AG04449 (cell line): ENCODE measurements at regions of chr4 and their contacts with region 1.

Region 1: GRCh38 chr4:88211473-88212252 is 53.2 kb upstream of the ABCG2 start:
- DNase-seq: no peak
- H3K4me3 ChIP-seq: no peak overlapping the region
- CTCF ChIP-seq: peak; percentile 28

Region 2: DNA sequence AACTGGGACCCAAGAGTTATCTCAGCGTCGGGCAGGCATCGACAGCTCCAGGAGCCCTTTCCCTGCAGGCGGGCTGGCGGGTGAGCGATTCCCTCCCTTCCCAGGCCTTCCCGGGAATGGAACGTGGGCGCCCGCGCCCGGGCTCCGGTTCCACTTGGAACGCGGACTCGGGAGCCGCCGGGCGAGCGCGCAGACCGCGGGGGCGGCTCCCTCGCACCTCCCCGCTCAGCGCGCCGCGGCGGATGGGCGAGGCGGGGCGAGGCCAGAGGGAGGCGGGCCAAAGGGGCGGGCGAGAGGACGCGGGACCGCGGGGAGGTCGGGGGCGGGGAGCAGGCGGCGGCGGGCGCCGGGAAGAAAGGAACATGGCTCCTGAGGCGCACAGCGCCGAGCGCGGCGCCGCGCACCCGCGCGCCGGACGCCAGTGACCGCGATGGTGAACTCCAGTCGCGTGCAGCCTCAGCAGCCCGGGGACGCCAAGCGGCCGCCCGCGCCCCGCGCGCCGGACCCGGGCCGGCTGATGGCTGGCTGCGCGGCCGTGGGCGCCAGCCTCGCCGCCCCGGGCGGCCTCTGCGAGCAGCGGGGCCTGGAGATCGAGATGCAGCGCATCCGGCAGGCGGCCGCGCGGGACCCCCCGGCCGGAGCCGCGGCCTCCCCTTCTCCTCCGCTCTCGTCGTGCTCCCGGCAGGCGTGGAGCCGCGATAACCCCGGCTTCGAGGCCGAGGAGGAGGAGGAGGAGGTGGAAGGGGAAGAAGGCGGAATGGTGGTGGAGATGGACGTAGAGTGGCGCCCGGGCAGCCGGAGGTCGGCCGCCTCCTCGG is 204.2 kb before region 1 on chr4 and contains the start of gene PKD2:
- CTCF ChIA-PET with region 1: interaction called, 10 read pairs
- POLR2A ChIA-PET with region 1: no interaction called
- DNase-seq: no peak
- H3K4me3 ChIP-seq: peak within 1 kb of the TSS; percentile 78
- CTCF ChIP-seq: no peak

Region 3: DNA sequence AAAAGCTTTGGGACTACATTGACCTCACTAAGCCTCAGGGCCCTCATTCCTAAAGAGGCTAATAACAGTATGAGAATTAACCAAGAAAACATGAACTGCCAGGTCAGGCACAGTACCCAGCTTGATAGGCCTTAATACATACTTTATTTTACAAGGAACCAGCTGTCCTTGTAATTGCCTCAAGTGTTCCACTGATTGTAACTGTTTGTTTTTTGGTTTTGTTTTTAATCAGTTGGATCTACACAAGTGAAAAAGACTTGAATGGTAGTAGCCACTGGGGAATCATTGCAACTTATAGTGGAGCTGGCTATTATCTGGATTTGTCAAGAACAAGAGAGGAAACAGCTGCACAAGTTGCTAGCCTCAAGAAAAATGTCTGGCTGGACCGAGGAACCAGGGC is 168.7 kb before region 1 on chr4:
- CTCF ChIA-PET with region 1: interaction called, 24 read pairs
- POLR2A ChIA-PET with region 1: interaction called, 3 read pairs
- DNase-seq: no peak
- H3K4me3 ChIP-seq: no peak overlapping the region
- CTCF ChIP-seq: no peak

Region 4: GRCh38 chr4:88084410-88084809 is 127.3 kb before region 1 on chr4:
- CTCF ChIA-PET with region 1: interaction called, 10 read pairs
- POLR2A ChIA-PET with region 1: no interaction called
- DNase-seq: no peak
- H3K4me3 ChIP-seq: no peak overlapping the region
- CTCF ChIP-seq: no peak

Region 5: GRCh38 chr4:88196013-88196365 is 15.7 kb before region 1 on chr4:
- CTCF ChIA-PET with region 1: interaction called, 58 read pairs
- POLR2A ChIA-PET with region 1: no interaction called
- DNase-seq: no peak
- H3K4me3 ChIP-seq: no peak overlapping the region
- CTCF ChIP-seq: no peak

Region 6: GRCh38 chr4:88514557-88515511 is 303.2 kb after region 1 on chr4:
- CTCF ChIA-PET with region 1: interaction called, 360 read pairs
- POLR2A ChIA-PET with region 1: no interaction called
- DNase-seq: no peak
- H3K4me3 ChIP-seq: no peak overlapping the region
- CTCF ChIP-seq: no peak